ENCODE measurements at regions of chr11 and their contacts with region 1.

Region 1: DNA sequence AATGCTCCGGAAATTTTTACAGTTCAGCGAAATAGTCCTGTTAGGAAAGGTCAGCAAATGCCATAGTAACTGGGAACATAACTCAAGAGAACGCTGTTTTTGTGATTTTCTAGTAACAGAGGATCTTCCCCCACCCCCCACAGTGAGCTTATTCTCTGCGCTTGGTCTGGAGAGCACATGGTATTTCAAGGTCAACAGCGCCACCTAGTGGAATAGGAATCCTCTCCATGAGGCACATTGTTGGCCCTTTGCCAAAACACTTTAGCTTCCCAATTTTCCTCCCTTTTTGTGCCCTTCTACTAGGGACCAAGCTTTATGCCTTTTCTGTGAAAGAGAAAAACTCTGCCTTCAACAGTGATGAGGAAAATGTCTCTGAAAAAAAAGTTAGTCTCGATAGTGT is 13.2 kb upstream of the OR4C12 start:
- DNase-seq: no peak
- H3K4me3 Mint-ChIP-seq: no peak overlapping the region
- H3K27ac Mint-ChIP-seq: no peak overlapping the region
- H3K4me1 Mint-ChIP-seq: no peaks in the 10 kb centered on the region
- H3K27me3 Mint-ChIP-seq: no peaks in the 10 kb centered on the region

Region 2: DNA sequence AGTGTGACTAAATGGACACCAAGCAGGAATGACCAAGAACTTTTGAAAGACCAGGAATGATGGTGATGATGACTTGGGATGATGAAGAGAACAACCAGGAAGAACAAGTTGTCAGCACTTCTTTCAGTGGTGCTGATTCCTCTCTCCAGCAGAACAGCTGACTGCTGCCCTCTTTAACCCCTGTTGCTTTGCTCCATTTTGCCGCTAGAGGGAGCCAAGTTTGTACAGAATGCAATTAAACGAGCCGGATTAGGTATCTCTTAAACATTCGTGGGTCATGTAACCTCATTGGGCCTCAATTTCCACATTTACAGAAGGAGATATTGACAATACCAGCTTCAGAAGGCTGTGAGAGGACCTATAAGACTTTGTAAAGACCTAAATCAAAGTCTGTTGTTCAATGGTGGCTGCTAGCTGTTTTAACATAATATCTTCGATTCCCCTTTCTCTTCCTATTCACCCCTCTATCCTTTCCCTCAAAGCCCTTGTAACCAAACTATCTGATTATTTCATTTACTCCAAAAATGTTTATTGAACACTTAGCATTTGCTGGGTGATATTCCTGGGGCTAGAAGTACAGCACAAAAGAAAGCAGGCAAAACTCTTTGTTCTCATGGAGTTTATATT is 1687.7 kb before region 1 on chr11:
- intact Hi-C with region 1: loop called (anchors 5 kb)
- DNase-seq: peak; percentile 43
- H3K4me3 Mint-ChIP-seq: no peak overlapping the region
- H3K27ac Mint-ChIP-seq: no peak overlapping the region
- H3K4me1 Mint-ChIP-seq: no peaks in the 10 kb centered on the region
- H3K27me3 Mint-ChIP-seq: peaks cover 10% of the 10 kb centered on the region